Activated CD4-positive, alpha-beta T cell treated with anti-CD3 and anti-CD28 coated beads for 36 hours (primary cell): ENCODE measurements at regions of chr6 and their contacts with region 1.

Region 1: DNA sequence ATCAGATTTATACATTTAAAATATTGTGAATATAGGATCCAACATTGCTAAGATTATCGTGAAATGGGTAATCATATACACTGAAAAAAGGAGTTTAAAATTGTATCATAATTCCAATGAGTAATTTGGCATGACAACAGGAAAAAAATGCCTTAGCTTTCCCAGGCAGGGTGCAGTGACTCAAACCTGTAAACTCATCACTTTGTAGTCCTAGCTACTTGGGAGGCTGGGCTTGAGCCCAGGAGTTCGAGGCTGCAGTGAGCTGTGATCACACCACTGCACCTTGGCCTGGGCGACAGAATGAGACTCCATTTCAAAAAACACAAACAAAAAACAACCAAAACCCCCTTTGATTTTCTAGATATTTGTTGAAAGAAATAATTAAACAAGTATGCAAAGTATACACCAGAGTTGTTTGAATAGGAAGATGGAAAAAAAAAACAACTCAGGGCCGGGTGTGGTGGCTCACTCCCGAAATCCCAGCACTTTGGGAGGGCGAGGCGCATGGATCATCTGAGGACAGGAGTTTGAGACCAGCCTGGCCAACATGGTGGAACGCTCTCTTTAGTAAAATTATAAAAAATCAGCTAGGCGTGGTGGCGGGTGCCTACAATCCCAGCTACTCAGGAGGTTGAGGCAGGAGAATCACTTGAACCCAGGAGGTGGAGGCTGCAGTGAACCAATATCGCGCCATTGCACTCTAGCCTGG is 98.7 kb downstream of the TRERF1 start:
- DNase-seq: no peak
- ATAC-seq: no peak
- H3K4me3 Mint-ChIP-seq: no peak overlapping the region
- H3K27ac Mint-ChIP-seq: no peak overlapping the region
- H3K4me1 Mint-ChIP-seq: peaks cover 17% of the 10 kb centered on the region
- H3K27me3 Mint-ChIP-seq: no peaks in the 10 kb centered on the region

Region 2: GRCh38 chr6:42367353-42368011 is 14.5 kb after region 1 on chr6:
- CTCF ChIA-PET with region 1: interaction called, 6 read pairs
- POLR2A ChIA-PET with region 1: no interaction called
- intact Hi-C with region 1: loop called (anchors 1 kb)
- DNase-seq: peak; percentile 41
- ATAC-seq: peak; percentile 45
- H3K4me3 Mint-ChIP-seq: peak overlapping the region; percentile 64
- H3K27ac Mint-ChIP-seq: peak overlapping the region; percentile 77
- H3K4me1 Mint-ChIP-seq: peaks cover 69% of the 10 kb centered on the region
- H3K27me3 Mint-ChIP-seq: no peaks in the 10 kb centered on the region